Ascending aorta (tissue), 2 donors: ENCODE measurements at regions of chr2 and their contacts with region 1.

Region 1: DNA sequence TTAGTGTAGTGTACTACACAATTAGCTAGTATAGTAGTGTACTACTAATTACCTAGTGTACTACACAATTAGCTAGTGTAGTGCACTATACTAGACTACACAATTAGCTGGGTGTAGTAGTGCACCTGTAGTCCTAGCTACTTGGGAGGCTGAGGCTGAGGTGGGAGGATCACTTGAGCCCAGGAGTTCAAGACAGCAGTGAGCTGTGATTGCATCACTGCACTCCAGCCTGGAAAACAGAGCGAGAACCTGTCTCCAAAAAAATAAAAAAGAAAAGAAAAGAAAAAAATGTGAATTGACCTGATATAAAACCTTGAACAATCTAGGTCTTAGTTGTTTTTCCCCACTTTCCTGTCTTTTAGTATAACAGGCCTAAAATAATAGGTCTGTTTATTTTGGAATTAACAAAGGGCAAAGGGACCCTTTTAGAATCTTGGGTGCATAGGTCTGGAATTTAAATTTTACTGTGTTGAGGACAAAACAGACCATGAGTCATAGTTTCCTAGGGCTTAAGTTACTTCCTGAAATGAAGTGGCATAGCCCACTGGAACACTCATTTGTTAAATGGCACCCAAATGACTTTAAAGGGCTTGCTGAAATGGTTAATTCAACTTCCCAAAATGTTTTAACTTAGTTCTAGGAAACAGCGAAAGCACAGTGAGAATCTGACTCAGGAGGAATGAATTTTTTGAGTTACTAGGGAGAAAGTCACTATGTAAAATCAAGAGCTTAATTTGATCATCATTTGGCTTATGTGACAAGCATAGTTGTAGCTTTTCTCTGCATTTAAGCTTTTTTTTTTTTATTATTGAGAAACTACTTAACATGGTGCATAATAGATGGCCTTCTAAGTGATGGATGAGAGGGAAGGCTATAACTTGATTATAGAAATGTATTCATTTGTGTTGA is 50.7 kb upstream of the ARL5A start:
- DNase-seq: peak in 1 of 2 donors; percentile 65
- H3K4me3 ChIP-seq: no peak overlapping the region
- H3K27ac ChIP-seq: peak overlapping the region; percentile 51 to 68
- H3K4me1 ChIP-seq: peaks cover 0 to 27% of the 10 kb centered on the region in 2 donors
- H3K27me3 ChIP-seq: no peaks in the 10 kb centered on the region
- CTCF ChIP-seq: no peak

Region 2: DNA sequence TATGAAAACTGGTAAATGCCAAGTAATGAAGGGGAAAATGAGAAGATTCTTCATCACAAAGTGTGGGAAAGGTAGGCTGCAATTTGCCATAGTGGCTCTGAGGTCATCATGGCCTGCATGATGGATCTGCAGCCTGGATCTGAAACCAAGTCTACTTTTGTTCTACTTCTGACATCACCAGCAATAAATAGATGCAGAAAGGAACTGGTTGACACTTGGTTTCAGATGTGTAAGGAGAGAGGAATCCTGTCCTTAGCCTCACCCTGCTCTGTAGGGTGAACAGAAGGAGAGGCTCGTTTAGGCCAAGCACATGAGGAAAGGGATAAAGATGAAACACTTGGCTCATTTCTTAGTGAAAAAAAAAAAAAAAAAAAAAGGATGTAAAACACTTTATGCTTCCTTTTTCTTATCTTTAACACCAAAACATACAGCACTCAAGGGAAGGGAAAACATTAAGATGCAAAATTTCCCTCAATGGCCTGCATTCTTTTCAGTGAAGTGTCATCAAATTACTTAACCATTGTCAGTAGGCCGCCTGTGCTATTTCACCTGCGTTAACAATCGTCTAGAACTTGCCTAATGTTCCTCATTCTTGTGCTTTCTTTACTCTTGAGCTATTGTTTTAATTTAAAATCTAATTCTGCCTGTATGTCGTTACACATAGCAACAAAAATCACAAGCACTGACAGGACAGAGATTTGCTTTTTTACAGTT is 148.5 kb before region 1 on chr2:
- intact Hi-C with region 1: no loop called
- DNase-seq: no peak
- H3K4me3 ChIP-seq: no peak overlapping the region
- H3K27ac ChIP-seq: no peak overlapping the region
- H3K4me1 ChIP-seq: no peaks in the 10 kb centered on the region
- H3K27me3 ChIP-seq: no peaks in the 10 kb centered on the region
- CTCF ChIP-seq: no peak

Region 3: GRCh38 chr2:151851761-151852160 is 27.1 kb before region 1 on chr2:
- intact Hi-C with region 1: no loop called
- DNase-seq: no peak
- H3K4me3 ChIP-seq: no peak overlapping the region
- H3K27ac ChIP-seq: no peak overlapping the region
- H3K4me1 ChIP-seq: no peaks in the 10 kb centered on the region
- H3K27me3 ChIP-seq: no peaks in the 10 kb centered on the region
- CTCF ChIP-seq: no peak

Region 4: DNA sequence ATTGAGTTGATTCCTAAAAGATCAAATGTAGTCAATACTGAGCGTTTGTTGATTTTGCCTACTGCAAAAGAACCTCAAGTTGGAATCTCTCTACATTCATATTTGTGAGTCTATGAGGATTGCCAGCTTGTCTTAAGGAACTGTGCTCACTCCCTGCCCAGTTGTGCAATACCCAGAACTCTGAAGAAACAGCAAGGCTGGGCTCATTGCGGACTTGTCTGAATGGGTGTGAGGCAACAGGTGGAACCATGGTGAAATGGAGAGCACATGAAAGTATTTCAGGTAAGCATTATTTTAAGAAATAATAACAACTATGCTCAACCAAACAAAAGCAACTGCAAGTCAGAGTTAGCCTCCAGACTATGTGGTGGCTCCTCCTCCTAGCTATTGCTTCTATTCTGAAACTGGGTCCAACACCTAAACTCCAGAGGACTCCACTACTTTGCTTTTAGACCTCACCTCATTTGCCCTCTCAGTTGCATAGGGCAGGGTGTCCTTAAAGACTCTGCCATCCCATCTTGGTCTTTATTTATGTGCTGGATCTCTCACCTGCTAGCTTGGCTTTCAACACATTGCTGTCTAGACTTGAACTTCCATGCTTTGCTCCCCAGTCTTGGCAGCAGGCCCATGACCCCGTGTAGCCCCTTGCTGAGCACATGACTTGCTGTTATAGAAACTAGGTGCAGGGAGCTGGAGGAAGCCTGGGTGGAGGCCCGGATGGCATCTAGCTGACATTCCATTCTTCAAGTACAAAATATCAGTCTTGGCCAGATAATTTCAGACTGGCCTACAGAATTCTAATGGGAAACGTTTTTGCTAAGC is 44.1 kb after region 1 on chr2:
- intact Hi-C with region 1: loop called (anchors 5 kb)
- DNase-seq: peak in 1 of 2 donors; percentile 85
- H3K4me3 ChIP-seq: no peak overlapping the region
- H3K27ac ChIP-seq: peak overlapping the region; percentile 58 to 65
- H3K4me1 ChIP-seq: peaks cover 10 to 11% of the 10 kb centered on the region in 2 donors
- H3K27me3 ChIP-seq: no peaks in the 10 kb centered on the region
- CTCF ChIP-seq: no peak

Region 5: GRCh38 chr2:151946899-151947822 is 68.3 kb after region 1 on chr2:
- intact Hi-C with region 1: loop called (anchors 5 kb)
- DNase-seq: peak in 1 of 2 donors; percentile 72
- H3K4me3 ChIP-seq: peak overlapping the region; percentile 51 to 53
- H3K27ac ChIP-seq: peak overlapping the region; percentile 69 to 70
- H3K4me1 ChIP-seq: peaks cover 0 to 12% of the 10 kb centered on the region in 2 donors
- H3K27me3 ChIP-seq: no peaks in the 10 kb centered on the region
- CTCF ChIP-seq: peak; percentile 53 to 70 (median 56)

Region 6: DNA sequence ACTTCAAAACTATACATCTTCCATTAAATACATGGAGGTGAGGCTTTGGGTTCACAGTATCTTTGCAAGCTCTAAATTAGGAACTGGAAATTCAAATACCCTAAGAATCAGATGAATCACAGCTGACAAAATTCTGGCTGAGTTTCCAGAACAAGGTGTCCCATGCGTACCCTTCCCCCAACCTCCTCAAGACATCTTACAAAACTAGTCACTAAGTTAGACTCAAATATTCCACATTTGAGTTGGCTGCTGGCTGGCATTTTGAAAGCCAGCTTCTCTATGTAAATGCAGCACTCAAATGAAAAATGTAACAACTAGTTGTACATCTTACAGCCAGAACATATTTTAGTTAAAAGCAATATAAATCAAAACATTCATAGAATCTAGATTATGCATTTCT is 80.3 kb after region 1 on chr2:
- intact Hi-C with region 1: loop called (anchors 2 kb)
- DNase-seq: peak in 1 of 2 donors; percentile 79
- H3K4me3 ChIP-seq: no peak overlapping the region
- H3K27ac ChIP-seq: peak overlapping the region in 1 of 2 donors; percentile 24
- H3K4me1 ChIP-seq: peaks cover 0 to 7% of the 10 kb centered on the region in 2 donors
- H3K27me3 ChIP-seq: no peaks in the 10 kb centered on the region
- CTCF ChIP-seq: no peak